Right cardiac atrium (tissue), 5 donors: ENCODE measurements at regions of chr17 and their contacts with region 1.

Region 1: DNA sequence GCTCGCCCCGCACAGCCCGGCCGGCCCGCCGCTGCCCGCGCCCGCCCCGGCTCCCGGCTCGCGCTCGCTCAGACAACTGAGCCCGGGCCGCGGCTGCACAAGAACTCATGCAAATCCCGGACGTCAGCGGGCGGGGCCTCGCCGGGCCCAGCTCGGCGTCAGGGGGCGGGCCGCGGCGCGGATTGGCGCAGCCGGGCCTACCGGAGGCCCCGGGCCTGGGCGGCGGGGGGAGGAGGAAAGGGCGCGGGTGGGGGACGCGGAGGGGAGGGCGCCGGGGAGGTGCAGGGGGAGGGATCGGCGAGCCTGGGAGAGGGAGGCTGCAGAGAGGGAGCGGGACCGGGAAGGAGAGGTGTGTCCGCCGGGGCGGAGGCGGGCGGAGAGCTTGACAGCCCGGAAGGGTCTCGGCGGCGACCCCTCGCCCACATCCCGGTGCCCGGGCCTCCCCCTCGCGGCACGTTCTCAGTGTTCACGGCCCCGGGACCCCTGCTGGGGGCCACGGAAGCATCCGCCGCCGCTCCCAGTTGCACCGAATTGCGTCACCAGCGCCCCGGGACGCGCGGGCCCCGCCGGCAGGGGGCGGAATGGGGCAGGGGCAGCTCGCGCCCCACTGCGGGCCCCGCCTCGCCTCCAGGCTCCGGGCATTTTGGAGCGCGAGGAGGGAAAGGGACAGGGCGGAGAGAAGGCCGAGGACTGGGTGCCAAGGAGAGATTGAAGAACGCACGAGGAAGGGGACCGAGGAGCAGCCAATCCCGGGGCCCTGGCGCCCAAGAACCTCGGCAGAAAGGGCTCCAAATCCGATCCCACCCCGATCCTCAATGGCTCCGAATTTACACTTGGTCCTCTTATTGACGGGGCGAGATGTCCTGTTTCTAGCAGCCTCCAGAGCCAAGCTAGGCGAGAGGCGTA is at the start of gene CBX4:
- DNase-seq: peak; percentile 96 to 99 (median 98)
- ATAC-seq: peak; percentile 84 to 87
- H3K4me3 ChIP-seq: peak within 1 kb of the TSS; percentile 90
- H3K27ac ChIP-seq: peak within 1 kb of the TSS; percentile 88
- H3K4me1 ChIP-seq: peaks cover 10% of the 10 kb centered on the region
- H3K27me3 ChIP-seq: no peaks in the 10 kb centered on the region
- total RNA-seq, gene CBX4: 26.9 to 32.6 (median 30.3) TPM

Region 2: DNA sequence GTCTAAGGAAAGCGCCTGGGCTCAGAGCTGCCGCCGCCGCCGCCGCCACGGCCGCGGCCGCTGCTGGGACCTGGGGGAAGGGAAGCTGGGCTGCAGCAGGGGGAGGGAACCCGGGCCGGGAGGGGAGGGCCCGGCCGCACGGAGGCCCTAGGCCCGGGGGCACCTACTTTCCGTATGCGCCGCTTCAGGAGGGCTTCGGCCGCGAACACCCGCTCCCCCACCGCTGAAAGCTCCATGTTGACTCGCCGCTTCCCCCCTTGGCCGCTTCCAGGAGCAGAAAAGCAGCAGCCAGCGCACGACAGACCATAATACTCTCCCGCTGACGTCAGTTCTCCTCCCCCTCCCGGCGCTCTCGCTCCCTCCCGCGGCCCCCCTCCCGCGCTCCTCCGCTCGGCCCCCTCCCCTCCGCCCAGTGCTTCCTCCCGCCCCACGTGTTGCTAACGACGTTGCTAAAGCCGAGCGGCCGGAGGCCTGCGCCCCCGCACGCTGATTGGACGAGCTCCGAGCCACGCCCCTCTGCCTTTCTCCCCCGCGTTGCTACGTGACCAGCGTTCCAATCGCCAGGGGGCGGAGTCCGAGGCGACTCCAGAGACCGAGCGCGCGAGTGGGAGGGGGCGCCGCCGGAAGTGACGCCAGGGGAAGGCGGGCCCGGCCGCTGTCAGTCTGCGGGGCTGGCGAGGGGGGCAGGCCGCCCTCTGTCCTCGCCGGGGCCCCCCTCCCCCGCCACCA is 42.7 kb before region 1 on chr17 and contains the start of gene CBX8:
- intact Hi-C with region 1: loop called in 1 of 4 experiments (anchors 2 kb)
- DNase-seq: peak; percentile 100
- ATAC-seq: peak; percentile 96 to 97
- H3K4me3 ChIP-seq: peak within 1 kb of the TSS; percentile 74
- H3K27ac ChIP-seq: peak within 1 kb of the TSS; percentile 65
- H3K4me1 ChIP-seq: no peaks in the 10 kb centered on the region
- H3K27me3 ChIP-seq: no peaks in the 10 kb centered on the region
- total RNA-seq, gene CBX8: 2.4 to 7.3 (median 5.5) TPM

Region 3: DNA sequence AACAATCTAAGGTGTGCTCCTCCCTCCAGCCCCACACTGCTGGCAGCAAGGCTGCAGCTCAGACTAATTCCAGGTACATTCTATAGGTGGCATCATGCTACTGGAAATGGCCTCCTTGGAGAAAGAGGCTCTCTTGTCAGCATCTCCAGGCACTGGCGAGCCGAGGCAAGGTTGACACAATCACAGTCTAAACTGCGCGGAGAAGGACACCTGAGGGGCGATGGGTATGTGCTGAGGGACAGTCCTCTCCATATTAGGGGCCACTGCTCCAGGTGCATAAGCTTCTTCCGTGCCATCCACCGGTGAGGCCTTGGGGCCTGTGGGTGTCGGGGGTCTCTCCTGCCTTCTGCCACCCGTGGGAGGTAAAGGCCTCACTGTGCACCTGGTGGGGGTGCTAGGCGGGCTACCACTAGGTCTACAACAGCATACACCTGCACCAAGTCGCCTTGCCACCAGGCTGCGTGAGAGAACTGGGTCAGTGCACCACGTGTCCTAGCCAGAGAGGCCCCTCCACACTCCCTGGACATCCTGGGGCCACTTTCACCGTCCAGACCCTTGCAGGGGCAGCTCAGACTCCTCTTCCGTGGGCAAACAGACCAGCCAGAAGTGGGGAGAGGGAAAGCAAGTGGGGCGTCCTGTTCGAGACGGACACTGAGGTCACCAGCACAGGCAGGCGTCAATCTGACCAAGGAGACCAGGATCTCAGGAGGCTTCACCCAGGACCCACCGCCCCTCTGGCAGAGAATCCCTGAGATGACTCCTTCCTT is 30.7 kb before region 1 on chr17:
- intact Hi-C with region 1: loop called in 1 of 4 experiments (anchors 5 kb)
- DNase-seq: peak; percentile 15 to 51 (median 39)
- ATAC-seq: peak; percentile 3 to 20
- H3K4me3 ChIP-seq: no peak overlapping the region
- H3K27ac ChIP-seq: no peak overlapping the region
- H3K4me1 ChIP-seq: peaks cover 5% of the 10 kb centered on the region
- H3K27me3 ChIP-seq: no peaks in the 10 kb centered on the region

Region 4: GRCh38 chr17:79933863-79934652 is 94.4 kb after region 1 on chr17:
- intact Hi-C with region 1: no loop called
- DNase-seq: peak in 1 of 3 donors; percentile 70
- ATAC-seq: peak; percentile 23
- H3K4me3 ChIP-seq: no peak overlapping the region
- H3K27ac ChIP-seq: no peak overlapping the region
- H3K4me1 ChIP-seq: no peaks in the 10 kb centered on the region
- H3K27me3 ChIP-seq: no peaks in the 10 kb centered on the region